A549 (cell line): ENCODE measurements at regions of chr12 and their contacts with region 1.

Region 1: GRCh38 chr12:95204141-95204866 is 13.0 kb downstream of the FGD6 start:
- DNase-seq: peak; percentile 92 to 99
- ATAC-seq: peak; percentile 93 to 95
- H3K4me3 ChIP-seq: peak overlapping the region; percentile 35
- H3K27ac ChIP-seq: peak overlapping the region; percentile 95 to 99
- H3K4me1 ChIP-seq: peaks cover 70% of the 10 kb centered on the region
- CTCF ChIP-seq: no peak
- EP300 ChIP-seq: peak; percentile 77 to 91; a peak in 4 of 5 replicates
- POLR2A ChIP-seq: no peak
- RAD21 ChIP-seq: peak; percentile 41 to 59

Region 2: GRCh38 chr12:95173392-95174251 is 30.7 kb before region 1 on chr12:
- CTCF ChIA-PET with region 1: interaction called, 4 read pairs
- POLR2A ChIA-PET with region 1: interaction called, 13 read pairs
- DNase-seq: peak; percentile 70 to 90
- ATAC-seq: peak; percentile 78 to 85
- H3K4me3 ChIP-seq: no peak overlapping the region
- H3K27ac ChIP-seq: peak overlapping the region; percentile 80 to 92
- H3K4me1 ChIP-seq: peaks cover 94% of the 10 kb centered on the region
- CTCF ChIP-seq: no peak
- EP300 ChIP-seq: peak in 1 of 2 experiments; percentile 87; a peak in 4 of 5 replicates
- POLR2A ChIP-seq: no peak
- RAD21 ChIP-seq: no peak; a peak in 2 of 5 replicates

Region 3: DNA sequence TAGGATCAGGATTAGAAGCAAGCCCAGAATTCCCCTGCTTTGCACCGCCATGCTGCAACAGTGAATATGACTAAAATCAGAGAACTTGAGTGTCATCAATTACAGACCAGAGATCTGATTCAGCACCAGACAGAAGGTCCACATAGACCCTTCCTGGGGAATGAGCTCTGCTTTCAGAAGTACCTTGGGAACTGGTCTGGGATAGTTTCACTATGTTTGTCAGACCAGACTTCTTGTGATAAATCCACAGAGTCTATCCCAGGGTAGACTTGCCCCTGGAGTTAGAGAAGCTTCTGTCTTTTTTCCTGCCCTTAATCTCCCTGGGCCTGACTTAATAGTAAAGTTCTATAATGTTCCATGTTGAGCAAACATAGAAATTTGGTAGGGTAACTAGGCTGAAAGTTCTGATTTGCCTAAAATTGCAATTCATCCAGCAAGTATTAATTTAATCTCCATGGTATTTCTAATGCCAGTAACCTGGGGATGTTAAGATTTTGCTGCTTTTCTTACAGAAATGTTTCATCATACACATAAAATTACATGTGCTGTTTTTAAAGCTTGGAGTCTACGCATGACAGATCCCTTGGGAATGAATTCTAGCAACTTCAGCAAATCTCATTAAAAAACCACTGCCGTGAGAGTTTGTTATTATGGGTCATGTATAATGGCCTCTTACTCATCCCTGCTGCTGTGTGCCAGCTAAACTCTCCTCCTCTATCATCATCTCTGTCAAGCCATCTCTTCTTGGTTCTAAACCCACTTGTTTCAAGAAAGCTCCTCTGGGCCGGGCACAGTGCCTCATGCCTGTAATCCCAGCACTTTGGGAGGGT is 208.4 kb after region 1 on chr12:
- CTCF ChIA-PET with region 1: no interaction called
- POLR2A ChIA-PET with region 1: no interaction called
- DNase-seq: no peak
- ATAC-seq: peak; percentile 22 to 39; a peak in 1 of 6 replicates
- H3K4me3 ChIP-seq: no peak overlapping the region
- H3K27ac ChIP-seq: no peak overlapping the region
- H3K4me1 ChIP-seq: no peaks in the 10 kb centered on the region
- CTCF ChIP-seq: no peak
- EP300 ChIP-seq: no peak
- POLR2A ChIP-seq: no peak
- RAD21 ChIP-seq: no peak